ENCODE measurements at regions of chr6 and their contacts with region 1.

Region 1: DNA sequence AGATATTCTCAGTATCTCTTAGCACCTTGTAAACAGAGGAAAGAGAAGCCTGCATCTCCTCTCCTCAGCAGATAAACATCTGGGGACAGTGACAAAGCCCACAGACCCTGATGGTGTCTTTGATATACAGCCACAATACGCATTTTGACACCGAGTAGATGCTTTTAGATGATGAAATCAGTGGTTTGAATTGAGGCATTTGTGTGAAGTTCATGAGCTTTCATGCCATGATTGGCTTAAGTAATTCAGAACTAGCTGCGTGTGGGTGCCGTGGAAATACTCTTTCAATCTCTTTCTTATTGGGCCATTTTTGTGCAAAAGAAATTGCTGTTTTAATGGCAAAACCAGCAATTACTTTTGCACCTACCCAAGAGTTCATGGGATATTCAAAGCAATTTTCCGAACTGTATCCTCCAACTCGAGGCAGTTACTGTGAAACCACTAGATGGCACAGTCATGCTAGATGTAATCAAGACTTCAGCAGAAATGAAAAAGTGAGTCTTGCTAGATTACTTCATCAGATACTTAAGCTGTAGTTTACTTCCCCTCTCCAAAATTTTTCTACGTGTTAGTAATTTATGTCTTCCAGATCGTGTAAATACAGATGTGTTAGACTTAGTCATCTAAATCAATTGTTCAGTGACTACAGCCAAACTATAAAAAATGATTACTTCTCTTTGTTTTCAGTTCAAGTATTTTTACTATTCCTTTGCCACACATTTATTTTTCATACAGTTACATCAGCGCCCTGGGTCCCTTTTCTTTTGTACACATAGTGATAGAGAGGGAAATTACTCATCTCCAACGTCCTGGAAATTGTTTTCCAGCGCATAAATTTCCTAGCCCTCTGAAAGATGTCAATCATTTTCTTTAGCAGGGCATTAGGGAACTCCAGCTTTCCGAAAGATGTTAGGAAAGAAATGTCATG is 49.4 kb downstream of the IYD start:
- DNase-seq: peak; percentile 40
- ATAC-seq: peak; percentile 85
- H3K4me3 Mint-ChIP-seq: peak overlapping the region; percentile 61
- H3K27ac Mint-ChIP-seq: peak overlapping the region; percentile 83
- H3K4me1 Mint-ChIP-seq: peaks cover 40% of the 10 kb centered on the region
- H3K27me3 Mint-ChIP-seq: peaks cover 20% of the 10 kb centered on the region

Region 2: DNA sequence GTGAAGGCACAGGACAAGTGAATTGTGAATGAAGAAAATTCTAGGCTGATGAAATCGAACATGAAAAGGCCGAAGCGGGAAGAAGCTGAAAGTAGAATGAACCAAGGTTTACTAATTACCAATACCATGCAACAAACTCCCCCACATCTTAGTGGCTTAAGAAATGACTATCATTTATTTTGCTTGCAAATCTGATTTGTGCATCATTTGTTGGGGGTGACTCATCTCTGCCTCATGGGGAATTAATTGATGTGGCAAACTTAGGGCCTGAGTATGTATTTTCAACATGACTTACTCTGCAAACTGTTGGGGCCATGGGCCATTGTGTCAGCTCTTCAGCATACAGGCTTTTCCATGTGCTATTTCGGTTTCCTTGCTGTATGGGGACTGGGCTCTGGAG is 248.6 kb before region 1 on chr6:
- CTCF ChIA-PET with region 1: no interaction called
- POLR2A ChIA-PET with region 1: no interaction called
- intact Hi-C with region 1: loop called in 1 of 2 experiments (anchors 1 kb)
- DNase-seq: peak; percentile 73
- ATAC-seq: peak; percentile 98
- H3K4me3 Mint-ChIP-seq: no peak overlapping the region
- H3K27ac Mint-ChIP-seq: peak overlapping the region; percentile 69
- H3K4me1 Mint-ChIP-seq: peaks cover 17% of the 10 kb centered on the region
- H3K27me3 Mint-ChIP-seq: peaks cover 22% of the 10 kb centered on the region

Region 3: DNA sequence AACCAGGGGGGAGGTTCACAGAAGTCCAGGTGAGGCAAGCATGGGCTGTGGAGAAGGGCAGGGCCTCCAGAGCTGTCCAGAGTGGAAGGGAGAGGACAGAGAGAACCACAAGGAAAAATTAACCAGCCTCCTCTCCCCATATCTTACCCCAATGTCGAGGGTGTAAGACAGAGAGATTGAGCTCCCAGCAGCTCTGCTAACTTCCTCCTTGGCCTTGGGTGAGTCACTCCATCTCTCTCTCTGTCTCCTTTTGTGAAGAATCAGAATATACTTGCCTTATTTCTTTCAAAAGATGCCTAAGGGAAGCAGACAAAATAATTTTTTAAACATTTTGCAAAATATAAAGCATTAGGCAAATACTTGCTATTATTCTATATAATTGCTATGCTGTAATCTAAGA is 107.6 kb before region 1 on chr6:
- CTCF ChIA-PET with region 1: no interaction called
- POLR2A ChIA-PET with region 1: no interaction called
- intact Hi-C with region 1: no loop called
- DNase-seq: no peak
- ATAC-seq: no peak
- H3K4me3 Mint-ChIP-seq: no peak overlapping the region
- H3K27ac Mint-ChIP-seq: no peak overlapping the region
- H3K4me1 Mint-ChIP-seq: peaks cover 5% of the 10 kb centered on the region
- H3K27me3 Mint-ChIP-seq: peaks cover 26% of the 10 kb centered on the region

Region 4: DNA sequence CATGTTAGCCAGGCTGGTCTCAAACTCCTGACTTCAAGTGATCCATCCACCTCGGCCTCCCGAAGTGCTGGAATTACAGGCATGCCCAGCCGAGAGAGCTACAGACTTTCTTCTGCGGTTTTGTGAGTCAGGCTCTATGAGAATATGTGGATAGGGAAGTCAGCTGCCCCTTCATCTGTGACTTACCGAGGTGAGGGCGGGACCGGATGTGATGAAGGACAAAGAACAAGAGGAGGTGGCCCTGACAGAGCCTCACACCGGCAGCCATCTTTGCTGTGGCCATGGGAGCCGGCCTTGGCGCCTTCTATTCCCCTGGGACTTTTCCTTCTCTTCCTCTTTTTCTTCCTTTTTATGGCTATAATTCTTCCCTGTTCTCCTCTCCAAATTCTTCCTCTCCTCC is 17.7 kb after region 1 on chr6:
- CTCF ChIA-PET with region 1: no interaction called
- POLR2A ChIA-PET with region 1: no interaction called
- intact Hi-C with region 1: no loop called
- DNase-seq: no peak
- ATAC-seq: no peak
- H3K4me3 Mint-ChIP-seq: no peak overlapping the region
- H3K27ac Mint-ChIP-seq: no peak overlapping the region
- H3K4me1 Mint-ChIP-seq: no peaks in the 10 kb centered on the region
- H3K27me3 Mint-ChIP-seq: peaks cover 4% of the 10 kb centered on the region

Region 5: GRCh38 chr6:150491131-150491810 is 73.1 kb after region 1 on chr6:
- CTCF ChIA-PET with region 1: interaction called, 9 read pairs
- POLR2A ChIA-PET with region 1: no interaction called
- intact Hi-C with region 1: loop called (anchors 2 to 5 kb)
- DNase-seq: peak; percentile 36
- ATAC-seq: peak; percentile 89
- H3K4me3 Mint-ChIP-seq: peak overlapping the region; percentile 34
- H3K27ac Mint-ChIP-seq: peak overlapping the region; percentile 74
- H3K4me1 Mint-ChIP-seq: peaks cover 26% of the 10 kb centered on the region
- H3K27me3 Mint-ChIP-seq: no peaks in the 10 kb centered on the region

Region 6: GRCh38 chr6:150685860-150686259 is 267.7 kb after region 1 on chr6:
- CTCF ChIA-PET with region 1: interaction called, 4 read pairs
- POLR2A ChIA-PET with region 1: no interaction called
- intact Hi-C with region 1: loop called in 1 of 2 experiments (anchors 5 kb)
- DNase-seq: peak; percentile 81
- ATAC-seq: peak; percentile 92
- H3K4me3 Mint-ChIP-seq: no peak overlapping the region
- H3K27ac Mint-ChIP-seq: no peak overlapping the region
- H3K4me1 Mint-ChIP-seq: no peaks in the 10 kb centered on the region
- H3K27me3 Mint-ChIP-seq: no peaks in the 10 kb centered on the region

Region 7: DNA sequence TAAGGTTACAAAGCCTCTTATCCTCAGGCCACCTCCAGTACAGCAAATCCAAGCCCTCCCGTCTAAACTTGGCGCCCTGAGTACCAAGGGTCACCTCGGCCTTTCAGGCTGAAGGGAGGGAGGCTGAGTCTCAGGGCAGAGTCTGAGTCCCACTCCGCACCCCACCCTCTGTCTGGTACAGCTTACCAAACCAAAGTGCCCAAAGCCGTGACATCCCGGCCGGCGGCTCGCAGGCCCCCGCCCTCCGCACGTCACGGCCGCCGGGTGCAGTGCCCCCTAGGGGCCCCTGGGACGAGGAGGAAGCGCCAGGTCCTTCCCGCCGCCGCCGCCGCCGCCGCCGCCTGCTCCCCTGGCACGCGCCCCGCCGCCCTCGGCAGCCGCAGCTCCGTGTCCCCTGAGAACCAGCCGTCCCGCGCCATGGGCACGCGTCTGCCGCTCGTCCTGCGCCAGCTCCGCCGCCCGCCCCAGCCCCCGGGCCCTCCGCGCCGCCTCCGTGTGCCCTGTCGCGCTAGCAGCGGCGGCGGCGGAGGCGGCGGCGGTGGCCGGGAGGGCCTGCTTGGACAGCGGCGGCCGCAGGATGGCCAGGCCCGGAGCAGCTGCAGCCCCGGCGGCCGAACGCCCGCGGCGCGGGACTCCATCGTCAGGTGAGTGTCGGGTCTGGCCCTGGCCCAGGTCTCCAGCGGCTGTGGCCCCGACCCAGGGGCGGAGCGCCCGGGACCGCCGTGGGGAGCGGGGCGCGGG is 447.4 kb after region 1 on chr6 and contains the start of gene MTHFD1L:
- CTCF ChIA-PET with region 1: interaction called, 8 read pairs
- POLR2A ChIA-PET with region 1: no interaction called
- intact Hi-C with region 1: loop called in 1 of 2 experiments (anchors 5 kb)
- DNase-seq: peak; percentile 89
- ATAC-seq: peak; percentile 74
- H3K4me3 Mint-ChIP-seq: peak within 1 kb of the TSS; percentile 81
- H3K27ac Mint-ChIP-seq: peak within 1 kb of the TSS; percentile 94
- H3K4me1 Mint-ChIP-seq: peaks cover 38% of the 10 kb centered on the region
- H3K27me3 Mint-ChIP-seq: peaks cover 12% of the 10 kb centered on the region
- total RNA-seq, gene MTHFD1L: 103 to 129 TPM